ENCODE measurements at regions of chr9 and their contacts with region 1.

Region 1: DNA sequence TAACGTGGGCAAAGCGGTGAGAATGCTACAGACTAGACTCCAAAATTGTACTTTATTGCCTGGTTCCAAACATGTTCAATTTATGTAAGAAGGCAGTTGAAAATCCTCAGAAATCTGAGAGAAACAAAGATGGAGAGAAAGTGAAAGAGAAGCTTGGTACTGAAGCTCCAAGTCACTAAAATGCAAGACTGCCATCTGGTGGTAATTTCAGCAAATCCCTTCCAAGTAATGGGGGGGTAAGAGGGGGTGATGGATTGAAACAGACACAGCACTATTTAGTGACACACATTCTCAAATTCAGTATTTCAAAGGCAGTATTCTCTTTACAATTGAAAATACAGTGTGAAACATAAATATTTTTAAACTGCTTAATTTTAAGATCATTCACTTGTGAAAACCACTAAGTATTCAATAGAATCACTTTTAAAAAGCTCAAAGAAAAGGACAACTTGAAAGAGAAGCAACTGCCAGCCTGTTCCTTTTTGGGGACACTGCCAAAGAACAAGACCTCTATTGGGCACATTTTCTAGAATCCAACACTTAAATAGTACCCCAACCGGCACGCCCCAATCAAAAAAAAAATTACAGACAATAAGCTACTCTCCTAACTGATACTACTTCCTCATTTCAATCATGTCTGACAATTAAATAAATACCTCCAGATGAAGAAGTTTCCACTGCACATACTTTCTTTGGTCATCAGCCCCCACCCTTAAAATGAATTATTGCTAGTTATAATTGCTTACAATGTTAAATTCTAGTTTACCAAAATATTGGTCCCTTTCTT is 131.5 kb downstream of the AGTPBP1 start:
- DNase-seq: peak; percentile 74
- H3K4me3 ChIP-seq: peak overlapping the region in 1 of 3 experiments; percentile 15
- H3K27ac ChIP-seq: no peak overlapping the region
- H3K4me1 ChIP-seq: peaks cover 2% of the 10 kb centered on the region
- H3K27me3 ChIP-seq: no peaks in the 10 kb centered on the region
- CTCF ChIP-seq: peak; percentile 68 to 76
- POLR2A ChIP-seq: no peak

Region 2: GRCh38 chr9:84397151-84397728 is 1213.0 kb before region 1 on chr9:
- CTCF ChIA-PET with region 1: interaction called, 199 read pairs
- POLR2A ChIA-PET with region 1: interaction called, 4 read pairs
- dilution Hi-C with region 1: no loop called
- intact Hi-C with region 1: loop called (anchors 1 kb)
- DNase-seq: peak; percentile 69
- H3K4me3 ChIP-seq: no peak overlapping the region
- H3K27ac ChIP-seq: no peak overlapping the region
- H3K4me1 ChIP-seq: peaks cover 8% of the 10 kb centered on the region
- H3K27me3 ChIP-seq: no peaks in the 10 kb centered on the region
- CTCF ChIP-seq: peak; percentile 66 to 81
- POLR2A ChIP-seq: no peak

Region 3: GRCh38 chr9:84697509-84698114 is 912.7 kb before region 1 on chr9:
- CTCF ChIA-PET with region 1: interaction called, 77 read pairs
- POLR2A ChIA-PET with region 1: no interaction called
- dilution Hi-C with region 1: no loop called
- intact Hi-C with region 1: loop called (anchors 1 kb)
- DNase-seq: peak; percentile 52
- H3K4me3 ChIP-seq: no peak overlapping the region
- H3K27ac ChIP-seq: no peak overlapping the region
- H3K4me1 ChIP-seq: peaks cover 5% of the 10 kb centered on the region
- H3K27me3 ChIP-seq: peaks cover 0 to 2% of the 10 kb centered on the region in 2 experiments
- CTCF ChIP-seq: peak; percentile 66 to 82
- POLR2A ChIP-seq: no peak

Region 4: GRCh38 chr9:85258823-85259370 is 351.4 kb before region 1 on chr9:
- CTCF ChIA-PET with region 1: interaction called, 42 read pairs
- POLR2A ChIA-PET with region 1: no interaction called
- dilution Hi-C with region 1: no loop called
- intact Hi-C with region 1: loop called (anchors 5 kb)
- DNase-seq: peak; percentile 80
- H3K4me3 ChIP-seq: peak overlapping the region in 1 of 3 experiments; percentile 41
- H3K27ac ChIP-seq: peak overlapping the region; percentile 27
- H3K4me1 ChIP-seq: peaks cover 15% of the 10 kb centered on the region
- H3K27me3 ChIP-seq: peaks cover 0 to 4% of the 10 kb centered on the region in 2 experiments
- CTCF ChIP-seq: peak; percentile 69 to 82
- POLR2A ChIP-seq: no peak

Region 5: DNA sequence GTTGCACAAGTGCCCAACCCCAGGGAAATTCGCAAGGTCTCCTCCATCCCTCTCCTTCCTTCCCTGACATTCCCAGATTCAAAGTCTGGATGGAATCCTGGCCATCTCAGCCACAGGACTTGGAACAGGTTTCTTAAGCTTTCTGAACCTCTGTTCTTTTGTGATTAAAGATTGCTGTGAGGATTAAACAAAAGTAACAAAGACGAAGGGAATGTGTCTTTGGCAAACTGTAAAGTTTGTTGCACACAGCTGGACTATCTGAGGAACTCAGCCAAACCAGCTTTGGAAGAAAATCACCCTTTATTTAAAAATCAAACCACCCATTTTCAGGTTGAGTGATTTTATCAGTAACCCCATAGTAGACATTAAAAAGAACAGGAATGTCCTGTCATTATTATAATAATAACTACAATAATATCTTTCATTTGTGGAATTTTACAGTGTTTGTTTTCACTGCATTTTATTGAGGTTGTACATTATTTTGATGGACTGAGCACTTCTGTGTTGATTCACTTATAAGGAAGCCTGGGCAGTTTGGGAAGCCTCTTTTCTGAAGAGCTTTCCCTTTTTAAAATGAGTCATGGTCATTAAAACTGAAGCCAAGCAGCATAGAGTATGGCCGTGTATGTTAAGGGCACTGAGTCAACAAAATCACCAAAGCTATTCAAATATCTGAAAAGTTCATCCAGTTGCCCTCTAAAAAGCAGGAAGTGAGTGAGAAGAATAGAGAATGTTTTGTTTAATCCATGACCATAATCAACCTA is 178.7 kb before region 1 on chr9:
- CTCF ChIA-PET with region 1: interaction called, 28 read pairs
- POLR2A ChIA-PET with region 1: no interaction called
- dilution Hi-C with region 1: no loop called
- intact Hi-C with region 1: no loop called
- DNase-seq: peak; percentile 75
- H3K4me3 ChIP-seq: no peak overlapping the region
- H3K27ac ChIP-seq: peak overlapping the region; percentile 38
- H3K4me1 ChIP-seq: peaks cover 25% of the 10 kb centered on the region
- H3K27me3 ChIP-seq: no peaks in the 10 kb centered on the region
- CTCF ChIP-seq: no peak
- POLR2A ChIP-seq: no peak

Region 6: DNA sequence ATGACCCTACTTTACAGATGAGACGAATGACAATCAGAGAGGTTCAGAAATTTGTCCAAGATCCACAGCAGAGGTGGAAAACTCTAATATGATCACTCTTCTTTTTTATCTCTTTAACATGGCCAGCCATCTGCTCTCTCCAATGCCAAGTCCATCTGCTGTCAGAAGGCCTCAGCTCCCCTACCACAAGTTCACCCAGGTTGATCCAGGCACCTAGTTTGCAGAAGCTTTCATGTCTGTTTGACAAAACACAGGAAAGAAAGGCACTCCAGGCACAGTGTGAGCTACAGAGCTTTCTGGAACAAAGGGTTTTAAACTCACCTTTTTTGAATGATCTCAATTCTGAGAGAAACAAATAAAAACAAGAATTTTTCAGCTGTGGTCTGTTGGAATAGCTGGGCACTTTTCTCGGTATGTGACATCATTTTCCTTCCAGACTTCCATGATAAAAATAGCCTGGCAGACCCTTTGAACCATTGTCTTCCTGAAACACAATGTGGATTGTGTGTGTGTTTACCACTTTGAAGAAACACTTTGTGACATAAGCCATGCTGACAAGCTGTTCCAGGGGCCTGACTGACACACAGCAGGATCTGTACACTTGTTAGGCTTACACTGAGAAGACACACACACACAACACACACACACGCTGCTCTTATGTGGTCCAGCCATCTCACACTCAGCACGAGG is 82.8 kb before region 1 on chr9:
- CTCF ChIA-PET with region 1: interaction called, 7 read pairs
- POLR2A ChIA-PET with region 1: no interaction called
- dilution Hi-C with region 1: no loop called
- intact Hi-C with region 1: loop called (anchors 5 kb)
- DNase-seq: peak; percentile 88
- H3K4me3 ChIP-seq: no peak overlapping the region
- H3K27ac ChIP-seq: peak overlapping the region; percentile 64
- H3K4me1 ChIP-seq: peaks cover 18% of the 10 kb centered on the region
- H3K27me3 ChIP-seq: peaks cover 13 to 17% of the 10 kb centered on the region in 2 experiments
- CTCF ChIP-seq: no peak
- POLR2A ChIP-seq: no peak

Region 7: DNA sequence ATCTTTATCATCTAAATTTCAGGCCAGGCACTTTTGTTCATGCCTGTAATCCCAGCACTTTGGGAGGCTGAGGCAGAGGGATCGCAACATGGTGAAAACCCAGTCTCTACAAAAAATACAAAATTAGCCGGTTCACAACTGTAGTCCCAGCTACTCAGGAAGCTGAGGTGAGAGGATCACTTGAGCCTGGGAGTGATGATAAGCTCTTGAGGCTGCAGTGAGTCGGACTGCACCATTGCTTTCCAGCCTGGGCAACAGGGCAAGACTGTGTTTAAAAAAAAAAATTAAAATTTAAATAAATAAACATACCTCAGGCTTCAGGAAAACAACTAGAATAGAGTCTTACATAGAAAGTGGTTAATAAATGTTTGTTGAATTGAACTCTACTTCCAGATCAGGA is 16.0 kb before region 1 on chr9:
- CTCF ChIA-PET with region 1: interaction called, 17 read pairs
- POLR2A ChIA-PET with region 1: no interaction called
- dilution Hi-C with region 1: no loop called
- intact Hi-C with region 1: no loop called
- DNase-seq: no peak
- H3K4me3 ChIP-seq: no peak overlapping the region
- H3K27ac ChIP-seq: no peak overlapping the region
- H3K4me1 ChIP-seq: no peaks in the 10 kb centered on the region
- H3K27me3 ChIP-seq: no peaks in the 10 kb centered on the region
- CTCF ChIP-seq: no peak
- POLR2A ChIP-seq: no peak